Activated CD4-positive, alpha-beta memory T cell treated with anti-CD3 and anti-CD28 coated beads for 36 hours (primary cell): ENCODE measurements at regions of chr15 and their contacts with region 1.

Region 1: DNA sequence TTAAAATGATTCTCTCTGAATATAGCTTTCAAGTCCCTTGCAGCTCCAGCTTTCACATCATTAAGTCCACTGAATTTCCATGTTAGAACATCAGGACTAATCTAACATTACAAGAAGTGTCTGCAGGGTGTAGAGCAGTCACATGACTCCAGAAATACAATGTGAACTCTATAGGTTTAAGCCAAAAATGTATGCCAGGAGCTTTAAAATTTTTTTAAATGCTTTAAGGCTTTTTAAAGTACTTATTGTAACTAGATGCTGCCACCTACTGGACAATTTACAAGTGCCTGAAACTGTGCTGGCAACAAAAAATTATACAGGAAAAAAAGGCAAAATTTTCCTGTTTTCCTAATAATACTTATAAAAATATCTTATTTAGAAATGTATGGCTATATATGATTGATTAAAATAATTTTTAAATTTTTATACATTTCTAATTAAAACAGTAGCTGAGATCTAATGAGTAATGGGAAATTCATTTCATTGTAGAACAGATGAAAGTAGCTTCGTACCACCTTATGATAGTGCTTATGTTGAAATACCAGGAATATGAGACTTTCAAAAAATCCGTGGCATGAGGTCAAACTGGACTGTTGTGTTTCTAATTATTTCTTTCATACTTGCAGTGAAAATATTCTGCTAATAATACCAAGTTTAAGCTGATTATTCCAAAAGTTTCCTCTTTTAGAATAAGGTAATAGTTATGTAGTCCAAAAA is 25.7 kb downstream of the FSIP1 start:
- DNase-seq: no peak
- H3K4me3 Mint-ChIP-seq: no peak overlapping the region
- H3K27ac Mint-ChIP-seq: no peak overlapping the region
- H3K4me1 Mint-ChIP-seq: no peaks in the 10 kb centered on the region
- H3K27me3 Mint-ChIP-seq: no peaks in the 10 kb centered on the region

Region 2: GRCh38 chr15:38817427-38818156 is 939.4 kb before region 1 on chr15:
- CTCF ChIA-PET with region 1: interaction called, 3 read pairs
- POLR2A ChIA-PET with region 1: no interaction called
- intact Hi-C with region 1: loop called (anchors 5 kb)
- DNase-seq: peak; percentile 89
- H3K4me3 Mint-ChIP-seq: no peak overlapping the region
- H3K27ac Mint-ChIP-seq: no peak overlapping the region
- H3K4me1 Mint-ChIP-seq: peaks cover 5% of the 10 kb centered on the region
- H3K27me3 Mint-ChIP-seq: peaks cover 3% of the 10 kb centered on the region

Region 3: DNA sequence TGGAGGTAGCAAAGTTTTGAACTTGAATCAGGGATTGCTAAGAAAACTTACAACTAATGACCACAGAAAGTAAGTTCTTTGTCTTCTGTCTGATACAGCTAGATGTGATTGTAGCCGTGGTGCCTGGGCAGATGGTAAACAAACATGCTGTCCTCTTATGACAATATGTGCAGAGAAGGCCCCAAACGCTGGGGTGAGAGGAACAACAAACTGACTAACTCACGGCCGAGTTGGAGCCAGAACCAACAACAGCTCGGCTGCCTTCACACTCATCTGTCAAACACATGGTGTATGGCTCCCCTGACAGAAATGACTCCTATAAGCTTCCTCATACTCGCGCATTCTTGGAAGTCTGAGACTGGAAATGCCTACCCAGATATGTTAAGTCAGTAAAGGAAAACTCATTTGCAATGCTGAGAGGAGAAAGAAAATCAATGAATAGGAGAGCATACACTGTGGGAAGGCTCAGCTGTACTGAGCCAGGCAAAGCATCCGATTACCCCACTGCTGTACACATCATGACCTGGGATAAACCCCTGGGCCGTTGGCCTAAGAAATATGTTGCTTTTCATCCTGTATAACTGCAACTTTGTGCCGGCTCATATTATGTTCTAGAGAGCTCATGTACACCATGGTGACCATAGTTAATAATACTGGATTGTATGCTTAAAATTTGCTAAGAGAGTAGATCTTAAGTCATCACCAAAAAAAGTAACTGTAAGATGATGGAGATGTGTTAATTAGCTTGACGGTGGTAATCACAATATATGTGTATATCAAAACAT is 170.4 kb before region 1 on chr15:
- CTCF ChIA-PET with region 1: interaction called, 161 read pairs
- POLR2A ChIA-PET with region 1: no interaction called
- intact Hi-C with region 1: loop called (anchors 2 kb)
- DNase-seq: no peak
- H3K4me3 Mint-ChIP-seq: no peak overlapping the region
- H3K27ac Mint-ChIP-seq: no peak overlapping the region
- H3K4me1 Mint-ChIP-seq: peaks cover 2% of the 10 kb centered on the region
- H3K27me3 Mint-ChIP-seq: peaks cover 10% of the 10 kb centered on the region

Region 4: DNA sequence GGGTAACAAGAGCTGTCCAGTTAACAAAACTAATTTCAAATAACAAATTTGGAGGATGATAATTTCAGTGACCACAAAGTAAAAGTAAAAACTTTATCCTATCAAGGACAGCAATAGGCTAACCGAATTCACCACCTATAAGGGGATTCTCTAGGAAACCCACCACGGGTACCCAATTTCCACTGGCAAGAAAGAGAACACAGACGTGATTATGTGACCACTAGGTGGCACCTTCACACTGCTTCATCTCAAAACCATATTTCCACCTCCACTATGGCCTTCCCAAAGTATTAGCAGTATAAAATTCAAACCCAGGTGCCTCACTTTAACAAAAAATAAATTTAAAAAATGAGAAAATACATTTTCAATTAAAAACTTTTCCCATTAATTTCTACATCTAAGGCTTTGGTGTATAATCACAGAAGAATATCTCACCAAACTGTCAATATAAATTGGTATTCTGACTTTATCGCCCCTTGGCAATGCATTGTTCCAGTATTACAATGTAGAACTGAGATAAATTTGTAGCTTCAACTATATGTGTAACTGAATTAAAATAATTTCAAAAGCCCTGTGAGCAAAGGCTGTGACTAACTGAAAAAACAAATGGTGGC is 70.9 kb before region 1 on chr15:
- CTCF ChIA-PET with region 1: interaction called, 211 read pairs
- POLR2A ChIA-PET with region 1: no interaction called
- intact Hi-C with region 1: loop called (anchors 1 kb)
- DNase-seq: peak; percentile 28
- H3K4me3 Mint-ChIP-seq: no peak overlapping the region
- H3K27ac Mint-ChIP-seq: no peak overlapping the region
- H3K4me1 Mint-ChIP-seq: no peaks in the 10 kb centered on the region
- H3K27me3 Mint-ChIP-seq: peaks cover 2% of the 10 kb centered on the region

Region 5: GRCh38 chr15:39736412-39737197 is 20.4 kb before region 1 on chr15:
- CTCF ChIA-PET with region 1: interaction called, 28 read pairs
- POLR2A ChIA-PET with region 1: no interaction called
- intact Hi-C with region 1: no loop called
- DNase-seq: no peak
- H3K4me3 Mint-ChIP-seq: no peak overlapping the region
- H3K27ac Mint-ChIP-seq: no peak overlapping the region
- H3K4me1 Mint-ChIP-seq: no peaks in the 10 kb centered on the region
- H3K27me3 Mint-ChIP-seq: no peaks in the 10 kb centered on the region

Region 6: GRCh38 chr15:39770748-39771689 is 14.1 kb after region 1 on chr15:
- CTCF ChIA-PET with region 1: interaction called, 15 read pairs
- POLR2A ChIA-PET with region 1: no interaction called
- intact Hi-C with region 1: no loop called
- DNase-seq: no peak
- H3K4me3 Mint-ChIP-seq: no peak overlapping the region
- H3K27ac Mint-ChIP-seq: no peak overlapping the region
- H3K4me1 Mint-ChIP-seq: peaks cover 13% of the 10 kb centered on the region
- H3K27me3 Mint-ChIP-seq: no peaks in the 10 kb centered on the region

Region 7: DNA sequence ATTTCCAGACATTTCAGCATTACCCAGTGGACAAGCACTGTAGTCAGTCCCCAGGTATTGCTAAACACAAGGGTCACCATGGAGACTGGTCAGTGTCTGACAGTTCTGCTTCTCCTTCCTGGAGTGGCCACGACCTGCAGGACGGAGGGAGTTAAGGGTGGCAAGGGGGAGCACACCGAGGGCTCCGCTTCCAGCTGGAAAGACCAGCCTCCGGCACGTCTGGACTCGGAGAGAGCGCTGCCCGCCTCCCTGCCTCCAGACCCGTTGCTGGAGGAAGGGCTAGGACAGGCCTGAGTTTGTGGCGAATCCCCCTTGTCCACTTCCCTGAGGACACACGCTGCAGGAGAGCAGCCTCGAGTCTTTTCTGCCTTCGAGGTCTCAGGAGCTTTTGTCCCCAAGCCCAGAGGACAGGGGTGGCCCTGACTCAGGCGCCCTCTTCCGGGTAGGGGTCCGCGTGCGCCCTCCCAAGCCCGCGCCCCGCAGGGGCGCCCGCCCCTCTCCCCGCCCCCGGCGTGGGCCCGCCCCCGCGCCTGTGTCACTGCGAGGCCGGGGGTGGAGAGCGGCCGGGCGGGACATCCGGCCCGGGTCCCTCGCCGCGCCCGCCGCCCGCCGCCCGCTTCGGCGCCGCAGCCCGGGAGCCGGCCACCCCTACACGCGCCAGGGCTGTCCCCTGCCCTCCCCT is 713.6 kb after region 1 on chr15 and contains the start of gene CHST14:
- CTCF ChIA-PET with region 1: no interaction called
- POLR2A ChIA-PET with region 1: no interaction called
- intact Hi-C with region 1: no loop called
- DNase-seq: peak; percentile 62
- H3K4me3 Mint-ChIP-seq: peak within 1 kb of the TSS; percentile 84
- H3K27ac Mint-ChIP-seq: peak within 1 kb of the TSS; percentile 76
- H3K4me1 Mint-ChIP-seq: peaks cover 23% of the 10 kb centered on the region
- H3K27me3 Mint-ChIP-seq: no peaks in the 10 kb centered on the region
- total RNA-seq, gene CHST14: 8.2 to 8.7 TPM